K562 (cell line): ENCODE measurements at regions of chr19 and their contacts with region 1.

Region 1: GRCh38 chr19:50705422-50706019 is 14.1 kb downstream of the SHANK1 start:
- DNase-seq: peak; percentile 81 to 84 (median 82)
- ATAC-seq: peak; percentile 92
- H3K4me3 ChIP-seq: no peak overlapping the region
- H3K27ac ChIP-seq: no peak overlapping the region
- H3K4me1 ChIP-seq: peaks cover 0 to 19% of the 10 kb centered on the region in 2 experiments; a peak in 2 of 5 replicates
- H3K27me3 ChIP-seq: peaks cover 20 to 37% of the 10 kb centered on the region in 2 experiments; a peak in 4 of 5 replicates
- CTCF ChIP-seq: peak; percentile 85 to 93 (median 88)
- EP300 ChIP-seq: no peak
- POLR2A ChIP-seq: no peak
- RAD21 ChIP-seq: peak; percentile 85 to 93

Region 2: GRCh38 chr19:50537762-50538230 is 167.7 kb before region 1 on chr19:
- CTCF ChIA-PET with region 1: no interaction called
- POLR2A ChIA-PET with region 1: no interaction called
- in situ Hi-C with region 1: no loop called
- intact Hi-C with region 1: loop called (anchors 10 kb)
- DNase-seq: peak; percentile 87 to 93 (median 88)
- ATAC-seq: peak; percentile 99
- H3K4me3 ChIP-seq: no peak overlapping the region
- H3K27ac ChIP-seq: no peak overlapping the region
- H3K4me1 ChIP-seq: peaks cover 0 to 5% of the 10 kb centered on the region in 2 experiments; a peak in 2 of 5 replicates
- H3K27me3 ChIP-seq: peaks cover 0 to under 1% of the 10 kb centered on the region in 2 experiments; a peak in 1 of 5 replicates
- CTCF ChIP-seq: peak; percentile 97 to 99 (median 98)
- EP300 ChIP-seq: no peak
- POLR2A ChIP-seq: no peak
- RAD21 ChIP-seq: peak; percentile 85 to 96

Region 3: GRCh38 chr19:50777754-50778303 is 72.3 kb after region 1 on chr19:
- CTCF ChIA-PET with region 1: interaction called, 61 read pairs
- POLR2A ChIA-PET with region 1: interaction called, 4 read pairs
- in situ Hi-C with region 1: no loop called
- intact Hi-C with region 1: loop called (anchors 1 kb)
- DNase-seq: peak in 1 of 4 experiments; percentile 55
- ATAC-seq: peak; percentile 59
- H3K4me3 ChIP-seq: 0 out of 2 replicates have a peak overlapping the region, but pooled peaks have one; percentile 4
- H3K27ac ChIP-seq: no peak overlapping the region
- H3K4me1 ChIP-seq: peaks cover 25 to 31% of the 10 kb centered on the region in 2 experiments; a peak in 4 of 5 replicates
- H3K27me3 ChIP-seq: no peaks in the 10 kb centered on the region
- CTCF ChIP-seq: no peak
- EP300 ChIP-seq: no peak
- POLR2A ChIP-seq: no peak
- RAD21 ChIP-seq: no peak

Region 4: DNA sequence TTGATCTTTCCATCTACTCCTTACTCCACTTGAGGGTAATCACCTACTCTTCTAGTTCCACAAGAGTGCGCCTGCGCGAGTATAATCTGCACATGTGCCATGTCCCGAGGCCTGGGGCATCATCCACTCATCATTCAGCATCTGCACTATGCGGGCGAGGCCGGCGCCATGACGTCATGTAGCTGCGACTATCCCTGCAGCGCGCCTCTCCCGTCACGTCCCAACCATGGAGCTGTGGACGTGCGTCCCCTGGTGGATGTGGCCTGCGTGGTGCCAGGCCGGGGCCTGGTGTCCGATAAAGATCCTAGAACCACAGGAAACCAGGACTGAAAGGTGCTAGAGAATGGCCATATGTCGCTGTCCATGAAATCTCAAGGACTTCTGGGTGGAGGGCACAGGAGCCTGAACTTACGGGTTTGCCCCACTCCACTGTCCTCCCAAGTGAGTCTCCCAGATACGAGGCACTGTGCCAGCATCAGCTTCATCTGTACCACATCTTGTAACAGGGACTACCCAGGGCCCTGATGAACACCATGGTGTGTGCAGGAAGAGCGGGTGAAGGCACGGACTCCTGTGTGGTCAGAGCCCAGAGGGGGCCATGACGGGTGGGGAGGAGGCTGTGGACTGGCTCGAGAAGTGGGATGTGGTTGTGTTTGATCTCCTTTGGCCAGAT is 165.0 kb after region 1 on chr19:
- CTCF ChIA-PET with region 1: no interaction called
- POLR2A ChIA-PET with region 1: no interaction called
- in situ Hi-C with region 1: no loop called
- intact Hi-C with region 1: loop called (anchors 2 kb)
- DNase-seq: peak; percentile 93 to 94 (median 94)
- ATAC-seq: peak; percentile 99
- H3K4me3 ChIP-seq: no peak overlapping the region
- H3K27ac ChIP-seq: no peak overlapping the region; the same call in 2 of the 3 replicates
- H3K4me1 ChIP-seq: peaks cover 4 to 7% of the 10 kb centered on the region in 2 experiments; a peak in 4 of 5 replicates
- H3K27me3 ChIP-seq: peaks cover 13 to 30% of the 10 kb centered on the region in 2 experiments; a peak in 3 of 5 replicates
- CTCF ChIP-seq: peak; percentile 92 to 98 (median 98)
- EP300 ChIP-seq: peak; percentile 51; the same call in 1 of the 2 replicates
- POLR2A ChIP-seq: peak; percentile 42; the same call in 1 of the 2 replicates
- RAD21 ChIP-seq: peak; percentile 88 to 96

Region 5: DNA sequence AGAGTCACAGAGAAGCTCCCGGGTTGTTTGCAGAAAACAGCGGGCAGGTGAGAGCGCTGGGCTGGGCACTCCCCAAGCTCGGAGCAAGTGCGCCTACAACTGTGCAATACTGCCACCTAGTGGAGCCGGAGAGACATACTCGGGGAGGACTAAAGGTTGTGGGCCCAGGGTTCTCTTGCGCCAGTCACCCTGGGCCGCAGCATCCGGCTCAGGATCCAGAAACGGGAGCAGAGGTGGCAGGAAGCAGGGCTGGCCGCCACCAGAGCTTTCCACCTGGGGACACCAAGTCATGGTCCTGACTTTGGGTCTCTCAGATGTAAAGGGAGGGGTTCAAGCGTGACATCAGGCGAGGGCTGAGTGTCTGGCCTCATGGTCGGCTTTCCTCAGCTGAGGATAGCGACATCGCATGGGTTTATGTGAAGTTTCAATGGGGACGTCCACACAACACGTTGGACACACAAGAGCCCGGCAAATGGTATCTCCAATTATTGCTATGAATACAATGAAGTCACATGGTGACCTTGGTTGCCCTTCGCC is 216.9 kb after region 1 on chr19:
- CTCF ChIA-PET with region 1: interaction called, 11 read pairs
- POLR2A ChIA-PET with region 1: no interaction called
- in situ Hi-C with region 1: loop called (anchors 5 kb)
- intact Hi-C with region 1: loop called (anchors 1 kb)
- DNase-seq: peak; percentile 84 to 89 (median 87)
- ATAC-seq: peak; percentile 100
- H3K4me3 ChIP-seq: no peak overlapping the region
- H3K27ac ChIP-seq: no peak overlapping the region
- H3K4me1 ChIP-seq: no peaks in the 10 kb centered on the region
- H3K27me3 ChIP-seq: peaks cover 6 to 23% of the 10 kb centered on the region in 2 experiments; a peak in 3 of 5 replicates
- CTCF ChIP-seq: peak; percentile 88 to 92 (median 91)
- EP300 ChIP-seq: no peak
- POLR2A ChIP-seq: no peak
- RAD21 ChIP-seq: peak; percentile 83 to 89

Region 6: DNA sequence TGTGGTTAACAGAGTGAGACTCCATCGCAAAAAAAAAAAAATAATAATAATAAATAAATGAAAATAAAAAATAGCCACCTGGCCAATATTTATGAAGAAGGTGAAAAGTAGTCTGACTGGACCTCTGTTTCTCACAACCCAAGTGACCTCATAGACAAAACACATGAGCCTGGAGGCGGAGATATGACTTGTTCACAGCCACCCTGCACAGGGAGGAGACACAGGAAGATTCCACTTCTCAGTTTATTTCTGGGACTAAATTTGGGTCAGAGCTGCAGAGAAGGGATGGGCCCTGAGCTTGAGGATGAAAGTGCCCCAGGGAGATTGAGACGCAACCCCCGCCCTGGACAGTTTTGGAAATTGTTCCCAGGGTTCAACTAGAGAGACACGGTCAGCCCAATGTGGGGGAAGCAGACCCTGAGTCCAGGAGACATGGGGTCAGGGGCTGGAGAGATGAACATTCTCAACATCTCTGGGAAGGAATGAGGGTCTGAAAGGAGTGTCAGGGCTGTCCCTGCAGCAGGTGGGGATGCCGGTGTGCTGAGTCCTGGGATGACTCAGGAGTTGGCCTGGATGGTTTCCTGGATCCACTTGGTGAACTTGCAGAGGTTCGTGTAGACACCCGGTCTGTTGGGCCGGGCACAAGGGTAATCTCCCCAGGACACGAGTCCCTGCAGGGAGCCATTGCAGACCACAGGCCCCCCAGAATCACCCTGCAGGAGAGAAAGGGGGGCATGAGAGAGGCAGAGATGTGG is 237.7 kb after region 1 on chr19:
- CTCF ChIA-PET with region 1: no interaction called
- POLR2A ChIA-PET with region 1: no interaction called
- in situ Hi-C with region 1: no loop called
- intact Hi-C with region 1: no loop called
- DNase-seq: no peak
- ATAC-seq: no peak
- H3K4me3 ChIP-seq: no peak overlapping the region
- H3K27ac ChIP-seq: no peak overlapping the region
- H3K4me1 ChIP-seq: no peaks in the 10 kb centered on the region
- H3K27me3 ChIP-seq: peaks cover 5 to 9% of the 10 kb centered on the region in 2 experiments; a peak in 4 of 5 replicates
- CTCF ChIP-seq: no peak
- EP300 ChIP-seq: no peak
- POLR2A ChIP-seq: no peak
- RAD21 ChIP-seq: no peak